ENCODE measurements at regions of chr5 and their contacts with region 1.

Region 1: GRCh38 chr5:89988998-89989655 is 420.4 kb downstream of the CETN3 start:
- DNase-seq: no peak
- ATAC-seq: peak; percentile 70

Region 2: GRCh38 chr5:89930591-89931392 is 58.3 kb before region 1 on chr5:
- intact Hi-C with region 1: loop called (anchors 10 kb)
- DNase-seq: no peak
- ATAC-seq: no peak

Region 3: DNA sequence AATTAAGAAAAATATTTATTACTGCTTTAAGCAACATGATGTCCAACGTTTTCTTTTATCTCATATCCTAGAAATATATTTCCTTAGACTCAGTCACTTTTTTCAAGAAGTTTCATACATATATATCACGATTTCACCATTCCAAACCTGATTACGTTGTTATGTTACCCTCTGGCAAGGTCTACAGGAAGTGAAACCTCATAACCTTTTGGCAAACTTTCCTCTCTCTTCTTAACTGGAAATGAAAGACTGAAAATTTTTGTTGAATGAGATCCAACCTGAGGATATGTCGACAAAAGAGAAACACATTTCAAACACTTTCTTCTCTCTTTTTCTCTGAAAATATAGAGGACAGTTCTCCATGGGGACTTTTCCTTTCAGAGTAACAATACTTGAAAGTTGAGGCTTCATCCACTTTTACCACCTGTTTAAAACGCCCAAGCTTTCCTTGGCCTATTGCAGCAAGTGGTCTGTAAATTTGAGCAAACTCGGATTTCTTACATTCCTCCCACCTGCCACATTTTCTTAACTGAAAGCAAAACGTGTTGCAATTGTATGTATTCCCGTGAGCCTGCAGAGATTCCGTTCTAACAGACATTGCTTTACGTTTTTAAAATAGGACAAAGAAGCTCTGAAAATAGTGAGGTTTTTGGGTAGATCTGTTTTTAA is 122.4 kb after region 1 on chr5:
- intact Hi-C with region 1: no loop called
- DNase-seq: no peak
- ATAC-seq: no peak